Breast epithelium (tissue), 4 donors: ENCODE measurements at regions of chr17 and their contacts with region 1.

Region 1: DNA sequence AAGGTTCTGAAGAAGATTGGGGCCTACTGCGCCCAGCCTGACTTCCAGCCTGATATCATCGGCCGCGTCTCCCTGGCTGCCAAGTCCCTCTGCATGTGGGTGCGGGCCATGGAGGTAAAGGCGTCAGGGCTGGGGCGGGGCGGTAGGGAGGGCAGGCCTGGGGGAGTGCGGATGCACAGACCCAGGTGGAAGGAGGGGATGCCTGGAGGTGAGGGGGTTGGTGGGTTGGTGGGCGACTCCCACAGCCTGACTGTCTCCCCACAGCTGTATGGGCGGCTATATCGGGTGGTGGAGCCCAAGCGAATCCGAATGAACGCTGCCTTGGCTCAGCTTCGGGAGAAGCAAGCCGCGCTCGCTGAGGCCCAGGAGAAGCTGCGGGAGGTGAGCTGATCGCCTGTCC is 26.8 kb upstream of the KDM6B start:
- DNase-seq: no peak
- H3K4me3 ChIP-seq: no peak overlapping the region
- H3K27ac ChIP-seq: no peak overlapping the region
- H3K4me1 ChIP-seq: no peaks in the 10 kb centered on the region
- H3K27me3 ChIP-seq: no peaks in the 10 kb centered on the region
- CTCF ChIP-seq: no peak
- POLR2A ChIP-seq: no peak

Region 2: GRCh38 chr17:7750321-7750821 is 56.8 kb before region 1 on chr17:
- intact Hi-C with region 1: loop called (anchors 5 kb)
- DNase-seq: no peak
- H3K4me3 ChIP-seq: no peak overlapping the region
- H3K27ac ChIP-seq: no peak overlapping the region
- H3K4me1 ChIP-seq: no peaks in the 10 kb centered on the region
- H3K27me3 ChIP-seq: no peaks in the 10 kb centered on the region
- CTCF ChIP-seq: no peak
- POLR2A ChIP-seq: no peak

Region 3: GRCh38 chr17:7774037-7774659 is 33.1 kb before region 1 on chr17:
- intact Hi-C with region 1: no loop called
- DNase-seq: no peak
- H3K4me3 ChIP-seq: no peak overlapping the region
- H3K27ac ChIP-seq: no peak overlapping the region
- H3K4me1 ChIP-seq: no peaks in the 10 kb centered on the region
- H3K27me3 ChIP-seq: no peaks in the 10 kb centered on the region
- CTCF ChIP-seq: no peak
- POLR2A ChIP-seq: no peak

Region 4: DNA sequence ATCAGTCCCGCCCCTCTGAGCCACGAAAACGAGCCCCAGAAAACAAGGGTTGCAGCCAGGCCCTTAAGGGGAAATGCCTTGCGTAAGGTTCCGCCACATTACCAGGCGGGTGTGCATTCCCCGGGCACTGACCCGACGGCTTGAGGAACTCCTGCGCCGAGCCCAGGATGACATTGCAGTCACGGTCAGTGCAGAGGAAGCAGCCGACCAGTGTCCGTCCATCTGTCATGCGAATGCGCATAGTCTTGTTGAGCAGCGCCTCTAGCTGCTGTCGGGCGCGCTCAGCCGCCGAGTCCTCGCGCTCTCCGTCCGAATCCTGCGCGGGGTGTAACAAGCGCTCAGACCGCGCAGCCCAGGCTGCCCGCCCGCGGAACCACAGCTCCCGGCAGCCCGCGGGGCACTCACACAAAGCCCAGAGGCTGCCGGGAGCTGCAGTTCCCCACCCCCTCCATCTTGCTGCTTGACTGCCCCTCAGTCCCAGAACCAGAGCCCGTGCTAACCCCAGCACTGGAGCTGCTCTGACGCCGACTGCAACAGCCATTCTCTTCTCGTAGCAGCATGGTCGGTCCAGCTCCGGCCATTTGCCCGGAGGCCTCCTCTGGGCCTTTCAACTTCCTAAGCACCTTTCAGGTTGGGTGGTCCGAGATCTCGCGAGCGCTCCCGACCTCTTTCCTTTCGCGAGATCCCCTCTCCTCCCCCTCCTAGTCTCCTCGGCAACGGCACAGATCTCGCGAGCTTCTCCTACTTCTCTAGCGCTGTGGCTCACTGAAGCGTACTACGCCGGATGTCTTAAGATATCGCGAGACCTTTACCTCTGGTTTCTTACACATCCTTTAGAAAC is 49.9 kb after region 1 on chr17 and contains the start of gene NAA38:
- intact Hi-C with region 1: loop called (anchors 1 kb)
- DNase-seq: peak; percentile 95 to 98
- H3K4me3 ChIP-seq: peak within 1 kb of the TSS; percentile 55 to 87 (median 73)
- H3K27ac ChIP-seq: peak within 1 kb of the TSS; percentile 95 to 97
- H3K4me1 ChIP-seq: peaks cover 5 to 21% of the 10 kb centered on the region in 2 donors
- H3K27me3 ChIP-seq: no peaks in the 10 kb centered on the region
- CTCF ChIP-seq: peak; percentile 18 to 40 (median 19)
- POLR2A ChIP-seq: no peak
- total RNA-seq, gene NAA38: 84.7 to 92.4 (median 89.9) TPM